ENCODE measurements at regions of chr4 and their contacts with region 1.

Region 1: DNA sequence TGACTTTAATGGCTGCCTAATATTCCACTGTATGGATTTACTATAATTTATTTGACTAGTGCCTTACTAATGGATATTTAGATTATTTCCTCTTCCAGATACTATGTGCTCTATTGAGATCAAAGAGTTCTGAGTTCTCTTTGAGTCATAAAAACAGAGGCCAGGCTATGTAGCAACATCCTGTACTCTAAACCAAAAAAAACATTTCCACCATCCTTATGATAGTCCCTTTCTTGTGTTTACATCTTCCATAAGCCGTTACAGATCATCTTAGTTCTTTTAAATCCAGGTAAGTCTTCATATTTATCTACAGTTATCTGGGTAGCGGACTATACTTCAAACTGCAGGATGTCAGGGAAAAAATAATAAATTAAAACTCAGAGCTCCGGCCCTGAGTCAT is 56.6 kb upstream of the TMEM184C start:
- DNase-seq: no peak
- H3K4me3 ChIP-seq: no peak overlapping the region
- H3K27me3 ChIP-seq: no peaks in the 10 kb centered on the region
- CTCF ChIP-seq: no peak

Region 2: GRCh38 chr4:147525494-147526271 is 35.0 kb before region 1 on chr4:
- CTCF ChIA-PET with region 1: no interaction called
- POLR2A ChIA-PET with region 1: interaction called, 10 read pairs
- DNase-seq: no peak
- H3K4me3 ChIP-seq: no peak overlapping the region
- H3K27me3 ChIP-seq: no peaks in the 10 kb centered on the region
- CTCF ChIP-seq: no peak